HEK293 (cell line): ENCODE measurements at regions of chr1 and their contacts with region 1.

Region 1: DNA sequence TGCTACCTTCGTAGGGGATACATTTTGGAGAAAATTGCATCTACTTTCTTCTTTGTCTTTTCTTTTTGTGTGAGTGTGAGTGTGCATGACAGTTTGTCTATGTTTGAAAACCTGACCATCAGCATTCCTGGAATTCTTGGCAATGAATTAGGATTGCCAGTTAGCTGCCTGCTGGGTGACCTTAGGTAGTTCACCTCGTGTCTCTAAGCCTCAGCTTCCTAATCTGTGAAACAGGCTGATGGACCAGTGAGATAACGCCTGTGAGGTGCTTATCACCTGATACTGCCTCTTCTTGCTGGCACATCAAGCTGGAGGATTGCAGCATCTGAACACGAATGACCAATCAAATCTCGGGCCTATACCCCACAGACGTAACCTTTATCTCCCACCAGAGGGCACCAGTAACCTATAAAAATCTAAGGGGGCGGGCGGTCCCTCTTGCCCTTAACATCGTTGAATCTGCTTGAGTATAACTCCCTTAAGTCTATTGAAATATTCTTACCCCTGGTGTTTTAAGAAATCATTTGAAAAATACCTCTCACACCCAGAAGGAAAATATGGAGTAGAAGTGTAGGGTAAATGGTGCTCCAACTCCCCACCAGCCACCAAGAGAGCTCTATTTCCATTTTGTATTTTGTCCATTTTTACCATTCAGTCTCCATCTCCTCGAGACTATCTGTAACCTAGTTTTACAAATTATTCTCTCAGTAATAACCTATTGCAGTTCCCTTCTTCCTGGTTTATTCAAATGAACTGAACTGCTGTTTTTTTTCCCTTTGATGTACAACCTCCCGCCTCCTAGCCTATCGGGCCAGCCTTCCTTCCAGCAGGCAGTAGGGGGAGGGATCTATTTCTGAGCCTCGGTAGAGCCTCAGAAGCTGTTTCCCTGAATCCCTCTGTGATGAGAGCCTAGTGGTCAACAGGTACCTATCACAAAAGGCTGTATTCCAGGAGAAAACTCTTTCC is 49.7 kb downstream of the MDM4 start:
- H3K4me3 ChIP-seq: no peak overlapping the region
- H3K27ac ChIP-seq: no peak overlapping the region
- H3K4me1 ChIP-seq: no peaks in the 10 kb centered on the region
- CTCF ChIP-seq: 0 out of 2 replicates have a peak, but pooled peaks have one; percentile 47

Region 2: DNA sequence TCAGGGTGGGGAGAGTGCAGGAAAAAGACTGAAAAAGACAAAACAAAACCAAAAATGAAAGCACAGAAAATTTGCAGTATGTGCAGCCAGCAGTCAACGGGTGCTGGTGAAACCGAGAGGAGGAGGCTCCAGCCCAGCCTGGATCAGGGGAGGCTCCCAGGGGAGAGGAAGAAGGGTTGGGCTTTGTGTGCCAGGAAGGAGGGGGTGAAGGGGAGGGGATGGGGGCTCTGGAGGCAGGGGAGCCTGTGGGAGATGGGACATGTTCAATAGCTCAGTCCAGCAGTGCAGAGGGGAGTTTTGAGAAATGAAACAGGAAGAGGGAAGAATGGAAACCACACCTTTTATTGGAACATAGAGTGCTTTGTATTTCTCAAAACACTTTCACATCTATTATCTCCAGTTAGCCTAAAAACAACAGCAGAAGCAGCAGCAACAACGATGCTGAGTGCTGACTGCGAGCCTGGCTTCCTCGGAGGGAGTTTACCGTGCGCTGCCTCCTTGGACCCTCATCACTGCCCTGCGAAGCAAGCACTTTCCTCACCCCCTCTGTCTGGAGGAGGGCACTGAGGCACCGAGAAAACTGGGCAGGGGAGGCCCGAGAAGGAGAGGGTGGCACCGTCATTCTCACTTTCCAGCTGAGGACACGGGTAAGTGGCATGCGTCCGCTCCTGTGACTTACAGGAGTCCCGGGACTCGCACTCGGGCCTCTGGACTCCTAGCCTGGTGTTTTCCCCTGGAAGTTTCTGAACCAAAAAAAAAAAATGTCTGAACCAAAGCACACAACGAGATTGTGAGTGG is 13.2 kb after region 1 on chr1:
- CTCF ChIA-PET with region 1: interaction called, 13 read pairs
- POLR2A ChIA-PET with region 1: no interaction called
- H3K4me3 ChIP-seq: no peak overlapping the region
- H3K27ac ChIP-seq: no peak overlapping the region
- H3K4me1 ChIP-seq: no peaks in the 10 kb centered on the region
- CTCF ChIP-seq: no peak

Region 3: GRCh38 chr1:204623894-204624361 is 58.0 kb after region 1 on chr1:
- CTCF ChIA-PET with region 1: interaction called, 13 read pairs
- POLR2A ChIA-PET with region 1: no interaction called
- H3K4me3 ChIP-seq: no peak overlapping the region
- H3K27ac ChIP-seq: no peak overlapping the region
- H3K4me1 ChIP-seq: no peaks in the 10 kb centered on the region
- CTCF ChIP-seq: peak; percentile 75

Region 4: GRCh38 chr1:204746838-204747442 is 181.0 kb after region 1 on chr1:
- CTCF ChIA-PET with region 1: interaction called, 17 read pairs
- POLR2A ChIA-PET with region 1: no interaction called
- H3K4me3 ChIP-seq: no peak overlapping the region
- H3K27ac ChIP-seq: no peak overlapping the region
- H3K4me1 ChIP-seq: no peaks in the 10 kb centered on the region
- CTCF ChIP-seq: peak; percentile 45; the same call in 1 of the 2 replicates

Region 5: DNA sequence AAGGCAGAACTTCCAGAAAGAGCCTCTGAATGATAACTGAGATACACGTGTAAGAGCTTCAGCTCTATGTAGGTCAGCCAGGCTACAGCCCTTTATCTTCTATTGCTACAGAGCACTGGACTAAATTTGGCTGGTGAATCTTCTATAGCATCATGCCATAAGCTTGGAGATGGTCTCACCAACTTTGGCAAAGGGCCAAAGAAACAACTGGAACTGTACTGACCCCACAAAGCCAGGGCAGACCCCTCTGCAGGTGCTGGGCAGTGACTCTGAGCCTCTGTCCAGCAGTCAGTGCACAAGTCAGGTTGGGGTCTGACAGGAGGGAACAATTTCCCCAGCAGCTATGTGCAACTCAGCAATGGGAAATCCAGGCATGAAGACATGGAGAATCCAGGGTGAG is 246.9 kb after region 1 on chr1:
- CTCF ChIA-PET with region 1: interaction called, 401 read pairs
- POLR2A ChIA-PET with region 1: no interaction called
- H3K4me3 ChIP-seq: no peak overlapping the region
- H3K27ac ChIP-seq: no peak overlapping the region
- H3K4me1 ChIP-seq: no peaks in the 10 kb centered on the region
- CTCF ChIP-seq: no peak